ENCODE measurements at regions of chr9 and their contacts with region 1.

Region 1: DNA sequence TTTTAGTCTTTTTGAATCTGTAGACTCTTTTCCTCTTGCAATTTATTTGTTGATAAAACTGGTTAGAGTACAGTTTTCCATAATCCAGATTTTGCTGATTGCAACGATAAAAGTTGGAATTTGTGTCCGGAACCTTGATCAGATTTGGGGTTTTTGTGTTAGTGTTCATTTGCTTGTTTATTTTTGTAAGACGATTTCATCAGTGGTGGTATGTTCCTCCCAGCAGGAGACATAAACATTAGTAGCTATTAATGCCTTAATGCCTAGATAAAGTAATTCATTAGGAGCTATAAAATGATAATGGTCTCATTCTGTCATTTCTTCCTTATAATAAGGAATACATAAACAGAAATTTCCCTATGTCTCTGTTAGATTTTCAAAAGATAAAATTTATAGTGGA is 21.3 kb downstream of the RPS6 start:
- DNase-seq: no peak

Region 2: DNA sequence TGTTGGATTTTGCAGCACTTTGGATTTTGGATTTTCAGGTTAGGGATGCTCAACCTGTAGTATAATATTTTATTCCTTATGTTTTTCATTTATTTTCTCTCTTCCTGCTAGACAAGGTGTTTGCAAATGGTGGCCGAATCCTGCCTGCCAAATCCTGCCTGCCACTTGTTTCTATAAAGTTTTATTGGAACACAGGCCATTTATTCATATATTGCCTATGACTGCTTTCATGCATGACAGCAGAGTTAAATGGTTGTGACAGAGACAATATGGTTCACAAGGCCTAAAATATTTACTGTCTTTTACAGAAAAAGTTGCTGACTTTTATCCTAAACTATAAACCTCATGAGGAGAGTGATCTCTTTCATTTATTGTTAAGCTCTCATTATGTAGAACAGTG is 55.5 kb before region 1 on chr9:
- intact Hi-C with region 1: loop called (anchors 5 kb)
- DNase-seq: no peak

Region 3: GRCh38 chr9:19313573-19313972 is 45.1 kb before region 1 on chr9:
- intact Hi-C with region 1: no loop called
- DNase-seq: no peak

Region 4: DNA sequence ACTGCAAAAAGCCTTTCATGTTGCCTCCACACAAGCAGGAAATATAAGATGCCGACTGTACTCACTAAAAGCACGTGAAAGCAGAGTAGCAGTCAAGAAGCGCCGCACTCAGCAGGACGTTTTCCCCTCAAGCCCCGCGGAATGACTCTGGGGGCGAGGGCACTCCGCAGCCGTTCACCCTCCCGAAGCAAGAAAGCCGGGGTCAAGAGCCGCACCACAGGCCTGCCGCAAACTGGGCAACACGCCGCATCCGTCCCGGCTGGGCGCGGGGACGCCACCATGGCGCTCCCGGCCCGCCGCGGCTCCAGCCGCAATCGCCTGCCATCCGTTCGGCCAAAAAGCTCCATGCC is 21.0 kb after region 1 on chr9:
- intact Hi-C with region 1: no loop called
- DNase-seq: peak; percentile 76

Region 5: GRCh38 chr9:19513671-19514275 is 155.1 kb after region 1 on chr9:
- intact Hi-C with region 1: no loop called
- DNase-seq: no peak

Measured in cardiac septum (tissue), 1 donor.